ENCODE measurements at regions of chr18 and their contacts with region 1.

Region 1: DNA sequence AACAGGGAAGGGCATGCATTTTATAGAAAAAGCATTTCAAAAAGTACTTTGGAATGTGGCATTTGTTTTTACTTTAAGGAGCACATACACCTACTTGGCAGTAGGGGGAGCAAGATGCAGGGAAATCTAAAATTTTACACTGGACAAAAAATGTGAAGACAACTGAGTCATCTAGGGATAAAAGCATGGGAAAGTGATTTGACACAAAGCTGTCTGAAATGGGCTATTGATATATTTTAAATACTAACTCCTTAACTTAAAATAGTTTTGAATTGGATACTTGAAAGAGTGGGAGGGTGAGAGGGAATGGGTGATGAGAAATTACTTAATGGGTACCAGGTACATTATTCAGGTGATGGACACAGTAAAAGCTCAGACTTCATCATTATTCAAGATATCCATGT is 15.8 kb downstream of the TMEM200C start:
- DNase-seq: peak; percentile 24
- ATAC-seq: no peak
- H3K4me3 ChIP-seq: no peak overlapping the region
- H3K27ac ChIP-seq: no peak overlapping the region
- H3K4me1 ChIP-seq: no peaks in the 10 kb centered on the region
- H3K27me3 ChIP-seq: peaks cover 0 to 6% of the 10 kb centered on the region in 2 experiments; a peak in 2 of 5 replicates
- CTCF ChIP-seq: peak; percentile 69
- EP300 ChIP-seq: no peak
- POLR2A ChIP-seq: no peak
- RAD21 ChIP-seq: peak; percentile 39; the same call in 1 of the 2 replicates

Region 2: DNA sequence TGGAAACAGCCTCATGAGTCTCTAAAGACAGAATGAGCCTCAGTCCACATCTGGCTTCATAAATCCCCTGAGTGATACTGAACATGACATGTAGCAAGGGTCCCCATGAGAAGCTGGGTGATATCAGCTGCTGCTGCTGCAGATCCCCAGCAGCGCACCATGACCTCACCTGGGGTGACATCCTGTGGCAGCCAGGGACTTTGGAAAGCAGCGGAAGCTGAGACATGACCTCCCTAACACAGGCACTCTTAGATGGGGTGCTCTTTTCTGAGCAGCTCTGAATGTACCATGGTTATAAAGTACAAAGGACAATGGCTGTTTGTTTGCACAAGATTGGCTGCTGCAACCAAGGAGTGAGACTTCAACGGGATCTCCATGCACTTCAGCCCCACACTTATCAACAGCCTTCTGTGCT is 90.5 kb after region 1 on chr18:
- CTCF ChIA-PET with region 1: no interaction called
- POLR2A ChIA-PET with region 1: no interaction called
- in situ Hi-C with region 1: no loop called
- intact Hi-C with region 1: loop called (anchors 1 kb)
- DNase-seq: peak; percentile 87
- ATAC-seq: peak; percentile 98
- H3K4me3 ChIP-seq: no peak overlapping the region
- H3K27ac ChIP-seq: peak overlapping the region; percentile 64
- H3K4me1 ChIP-seq: peaks cover 52% of the 10 kb centered on the region
- H3K27me3 ChIP-seq: no peaks in the 10 kb centered on the region
- CTCF ChIP-seq: peak; percentile 73
- EP300 ChIP-seq: peak in 1 of 2 experiments; percentile 79; a peak in 2 of 4 replicates
- POLR2A ChIP-seq: no peak
- RAD21 ChIP-seq: no peak

Region 3: GRCh38 chr18:6120820-6121279 is 241.4 kb after region 1 on chr18:
- CTCF ChIA-PET with region 1: no interaction called
- POLR2A ChIA-PET with region 1: no interaction called
- in situ Hi-C with region 1: no loop called
- intact Hi-C with region 1: loop called (anchors 10 kb)
- DNase-seq: no peak
- ATAC-seq: no peak
- H3K4me3 ChIP-seq: no peak overlapping the region
- H3K27ac ChIP-seq: no peak overlapping the region
- H3K4me1 ChIP-seq: no peaks in the 10 kb centered on the region
- H3K27me3 ChIP-seq: no peaks in the 10 kb centered on the region
- CTCF ChIP-seq: no peak
- EP300 ChIP-seq: no peak
- POLR2A ChIP-seq: no peak
- RAD21 ChIP-seq: no peak

Region 4: DNA sequence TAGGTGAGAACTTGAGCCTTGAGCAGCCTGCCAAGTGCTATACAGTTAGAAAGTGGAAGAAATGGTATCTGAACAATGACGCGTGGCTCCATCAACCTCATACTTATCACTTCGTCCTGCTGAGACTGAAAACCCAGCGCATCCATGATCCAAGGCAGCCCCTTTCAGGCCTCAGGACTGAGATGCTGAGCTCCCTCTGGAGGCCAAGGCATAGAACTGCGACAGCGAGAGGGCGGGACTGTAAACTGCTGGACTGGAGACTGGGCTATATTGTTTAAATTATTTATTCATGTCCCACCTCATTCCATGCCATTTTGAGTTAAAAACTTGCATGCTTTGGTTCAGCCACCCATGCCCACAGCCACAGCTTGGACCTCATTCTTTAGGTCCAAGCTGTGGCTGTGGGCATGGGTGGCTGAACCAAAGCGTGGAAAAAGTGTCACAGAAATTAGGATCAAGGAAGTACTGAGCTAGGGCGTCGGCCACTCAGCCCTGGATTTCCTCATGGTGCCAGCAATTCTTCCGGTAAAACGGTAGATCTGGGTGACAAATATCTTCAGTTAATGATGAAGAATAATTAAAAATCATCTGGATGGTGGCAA is 339.7 kb after region 1 on chr18:
- CTCF ChIA-PET with region 1: interaction called, 5 read pairs
- POLR2A ChIA-PET with region 1: no interaction called
- in situ Hi-C with region 1: no loop called
- intact Hi-C with region 1: loop called (anchors 1 kb)
- DNase-seq: peak; percentile 24
- ATAC-seq: peak; percentile 80
- H3K4me3 ChIP-seq: no peak overlapping the region
- H3K27ac ChIP-seq: no peak overlapping the region
- H3K4me1 ChIP-seq: no peaks in the 10 kb centered on the region
- H3K27me3 ChIP-seq: no peaks in the 10 kb centered on the region
- CTCF ChIP-seq: peak; percentile 77
- EP300 ChIP-seq: no peak
- POLR2A ChIP-seq: no peak
- RAD21 ChIP-seq: no peak

Region 5: DNA sequence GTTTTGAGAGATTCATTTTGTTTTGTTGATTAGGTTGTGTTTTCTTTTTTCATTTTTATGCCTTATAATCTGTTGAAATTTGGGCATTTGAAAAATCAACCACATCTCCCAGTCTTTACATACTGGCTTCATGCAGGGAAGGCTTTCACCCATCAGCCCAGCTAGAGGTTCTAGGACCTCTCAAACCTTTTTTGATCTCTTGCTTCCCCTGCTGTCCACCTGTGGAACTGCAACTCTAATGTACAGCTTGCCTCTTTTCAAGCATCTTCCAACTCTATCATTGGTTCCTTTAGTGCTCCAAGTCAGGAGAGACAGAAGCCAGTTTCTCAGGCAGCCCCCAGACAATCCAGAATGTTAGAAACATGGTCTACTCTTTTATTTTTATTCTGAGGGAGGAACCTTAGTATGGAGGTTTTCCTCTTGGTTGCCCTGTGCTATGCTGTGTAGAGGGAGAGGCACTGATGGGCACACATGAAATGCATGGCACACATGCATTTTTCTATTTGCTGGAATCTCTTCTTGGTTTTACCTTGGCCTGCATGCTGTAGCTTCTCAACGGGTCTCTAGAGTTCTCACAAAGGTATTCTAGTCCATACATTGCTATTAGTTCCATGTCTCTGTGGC is 642.4 kb after region 1 on chr18:
- CTCF ChIA-PET with region 1: interaction called, 10 read pairs
- POLR2A ChIA-PET with region 1: no interaction called
- in situ Hi-C with region 1: loop called (anchors 10 kb)
- intact Hi-C with region 1: loop called (anchors 1 kb)
- DNase-seq: peak; percentile 53
- ATAC-seq: peak; percentile 66
- H3K4me3 ChIP-seq: no peak overlapping the region
- H3K27ac ChIP-seq: no peak overlapping the region
- H3K4me1 ChIP-seq: no peaks in the 10 kb centered on the region
- H3K27me3 ChIP-seq: no peaks in the 10 kb centered on the region
- CTCF ChIP-seq: peak; percentile 82
- EP300 ChIP-seq: no peak
- POLR2A ChIP-seq: no peak
- RAD21 ChIP-seq: no peak